Right lobe of liver (tissue), 6 donors: ENCODE measurements at regions of chr3 and their contacts with region 1.

Region 1: GRCh38 chr3:8441969-8442559 is 59.6 kb upstream of the LMCD1 start:
- DNase-seq: no peak
- ATAC-seq: peak; percentile 30 to 52 (median 50)
- H3K4me3 ChIP-seq: no peak overlapping the region
- H3K27ac ChIP-seq: no peak overlapping the region
- H3K4me1 ChIP-seq: peaks cover 0 to 19% (median 8%) of the 10 kb centered on the region in 4 donors
- H3K27me3 ChIP-seq: no peaks in the 10 kb centered on the region
- CTCF ChIP-seq: peak; percentile 68 to 84 (median 72)
- POLR2A ChIP-seq: no peak

Region 2: DNA sequence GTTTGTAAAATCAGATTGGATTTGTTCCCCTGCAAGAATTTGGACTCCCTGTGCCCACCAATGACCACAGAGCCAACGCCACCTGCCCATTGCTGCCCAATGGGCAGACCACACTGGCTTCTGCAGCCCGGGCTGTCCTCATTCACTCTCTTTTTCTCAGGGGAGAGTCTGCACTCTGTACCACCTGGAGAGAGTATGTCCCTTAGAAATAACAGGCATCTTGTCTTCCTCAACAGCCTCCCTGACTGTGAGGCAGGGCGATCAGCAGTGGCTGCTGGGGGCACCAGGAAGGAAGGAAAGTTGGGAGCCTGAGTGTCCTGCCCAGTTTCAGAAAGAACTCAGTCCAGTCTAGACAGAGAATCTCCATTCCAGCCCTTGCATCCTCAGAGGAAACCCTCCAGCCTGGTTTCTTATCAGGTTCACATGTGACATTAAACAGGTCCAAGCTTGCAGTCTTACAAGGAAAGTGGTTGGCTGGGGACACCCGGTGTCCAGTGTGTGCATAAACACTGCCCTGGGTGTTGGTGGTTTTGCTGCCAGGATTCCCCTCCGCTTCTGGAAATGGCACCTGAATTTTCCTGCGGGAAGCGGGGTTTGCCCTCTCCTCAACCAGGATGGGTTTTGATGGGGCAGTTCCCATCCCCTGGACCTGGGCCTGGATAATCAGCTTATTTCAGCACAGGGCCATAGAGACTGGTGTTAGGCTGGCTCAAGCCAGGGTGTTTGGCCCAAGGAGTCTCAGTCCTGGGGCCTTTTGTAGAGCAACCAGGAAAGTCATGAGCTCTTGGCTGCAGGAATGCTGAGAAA is 165.4 kb after region 1 on chr3:
- intact Hi-C with region 1: loop called in 1 of 2 experiments (anchors 5 kb)
- DNase-seq: peak in 2 of 3 donors; percentile 61 to 62
- ATAC-seq: peak; percentile 87 to 94 (median 92)
- H3K4me3 ChIP-seq: no peak overlapping the region
- H3K27ac ChIP-seq: no peak overlapping the region
- H3K4me1 ChIP-seq: peaks cover 0 to 3% (median 0%) of the 10 kb centered on the region in 4 donors
- H3K27me3 ChIP-seq: no peaks in the 10 kb centered on the region
- CTCF ChIP-seq: peak; percentile 48 to 70 (median 63)
- POLR2A ChIP-seq: no peak